A549 (cell line): ENCODE measurements at regions of chr5 and their contacts with region 1.

Region 1: GRCh38 chr5:39547553-39548154 is 122.9 kb upstream of the DAB2 start:
- DNase-seq: peak; percentile 49 to 56
- ATAC-seq: peak in 1 of 2 experiments; percentile 83; a peak in 3 of 6 replicates
- H3K4me3 ChIP-seq: no peak overlapping the region
- H3K27ac ChIP-seq: peak overlapping the region; percentile 19 to 46; a peak in 4 of 6 replicates
- H3K4me1 ChIP-seq: peaks cover 15% of the 10 kb centered on the region; the same call in 2 of the 3 replicates
- CTCF ChIP-seq: peak; percentile 88
- EP300 ChIP-seq: no peak
- POLR2A ChIP-seq: no peak
- RAD21 ChIP-seq: peak; percentile 92 to 94

Region 2: DNA sequence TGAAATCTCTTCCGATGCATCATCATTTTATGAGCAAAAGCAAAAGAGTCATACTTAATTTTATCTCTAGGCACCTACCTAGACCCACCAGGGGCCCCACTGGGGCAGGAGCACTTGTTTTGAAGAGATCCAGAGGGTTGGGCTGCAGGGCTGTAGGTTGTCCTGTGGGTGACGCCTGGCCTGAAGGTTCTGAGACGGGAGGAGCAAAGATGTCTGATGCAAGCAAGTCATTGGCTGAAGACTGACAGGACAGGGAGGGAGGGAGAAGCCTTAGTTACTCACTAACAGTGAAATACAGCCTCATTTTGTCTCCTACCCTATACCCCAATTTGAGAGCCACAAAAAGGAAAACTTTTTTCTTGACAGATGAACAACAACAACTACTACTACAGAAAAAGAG is 166.3 kb before region 1 on chr5:
- CTCF ChIA-PET with region 1: interaction called, 147 read pairs
- POLR2A ChIA-PET with region 1: interaction called, 8 read pairs
- DNase-seq: no peak
- ATAC-seq: no peak; a peak in 1 of 6 replicates
- H3K4me3 ChIP-seq: no peak overlapping the region
- H3K27ac ChIP-seq: no peak overlapping the region
- H3K4me1 ChIP-seq: no peaks in the 10 kb centered on the region
- CTCF ChIP-seq: no peak
- EP300 ChIP-seq: no peak
- POLR2A ChIP-seq: no peak
- RAD21 ChIP-seq: no peak

Region 3: GRCh38 chr5:39399135-39400036 is 148.3 kb before region 1 on chr5:
- CTCF ChIA-PET with region 1: interaction called, 12 read pairs
- POLR2A ChIA-PET with region 1: no interaction called
- DNase-seq: peak; percentile 62 to 89
- ATAC-seq: peak; percentile 96 to 99
- H3K4me3 ChIP-seq: no peak overlapping the region
- H3K27ac ChIP-seq: peak overlapping the region; percentile 75 to 88
- H3K4me1 ChIP-seq: peaks cover 48% of the 10 kb centered on the region
- CTCF ChIP-seq: no peak
- EP300 ChIP-seq: peak; percentile 65; a peak in 2 of 5 replicates
- POLR2A ChIP-seq: no peak
- RAD21 ChIP-seq: peak in 1 of 2 experiments; percentile 50; a peak in 2 of 5 replicates

Region 4: DNA sequence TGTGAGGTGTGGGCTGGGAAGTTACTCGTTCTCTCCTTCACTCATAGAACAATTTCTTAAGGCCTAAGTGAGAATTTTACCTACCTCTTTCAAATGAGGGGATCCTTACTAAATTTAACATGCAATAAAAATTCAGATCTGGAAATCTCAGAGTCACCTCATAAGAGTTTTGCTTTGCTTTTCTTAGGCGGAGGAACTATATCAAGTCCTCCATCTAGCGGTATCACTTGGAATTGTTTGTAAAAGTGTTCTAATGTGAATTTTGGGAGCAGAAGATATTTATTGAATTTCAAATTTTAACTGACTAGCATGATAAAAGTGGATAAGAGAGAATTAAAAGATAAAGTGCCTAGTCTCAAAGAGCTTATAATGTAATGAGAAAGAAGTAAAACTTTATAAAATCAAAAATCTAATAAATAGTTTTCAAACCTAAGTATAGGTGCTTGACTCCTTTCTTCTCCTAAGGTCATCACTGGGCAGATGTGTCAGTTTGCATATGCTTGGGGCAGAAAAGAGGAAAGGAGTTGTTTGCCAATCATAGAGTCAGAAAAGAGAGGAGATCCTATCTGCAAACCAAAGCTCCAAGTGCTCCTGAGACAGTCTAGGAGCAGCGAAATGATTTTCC is 22.9 kb after region 1 on chr5:
- CTCF ChIA-PET with region 1: interaction called, 14 read pairs
- POLR2A ChIA-PET with region 1: no interaction called
- DNase-seq: peak; percentile 10 to 50
- ATAC-seq: peak; percentile 59 to 65; a peak in 3 of 6 replicates
- H3K4me3 ChIP-seq: no peak overlapping the region
- H3K27ac ChIP-seq: peak overlapping the region in 1 of 2 experiments; percentile 56; a peak in 3 of 6 replicates
- H3K4me1 ChIP-seq: peaks cover 5% of the 10 kb centered on the region; the same call in 1 of the 3 replicates
- CTCF ChIP-seq: peak; percentile 80
- EP300 ChIP-seq: no peak
- POLR2A ChIP-seq: no peak
- RAD21 ChIP-seq: peak; percentile 79 to 82

Region 5: GRCh38 chr5:39616131-39616530 is 68.5 kb after region 1 on chr5:
- CTCF ChIA-PET with region 1: no interaction called
- POLR2A ChIA-PET with region 1: no interaction called
- DNase-seq: no peak
- ATAC-seq: no peak
- H3K4me3 ChIP-seq: no peak overlapping the region
- H3K27ac ChIP-seq: no peak overlapping the region
- H3K4me1 ChIP-seq: no peaks in the 10 kb centered on the region
- CTCF ChIP-seq: no peak
- EP300 ChIP-seq: no peak
- POLR2A ChIP-seq: no peak
- RAD21 ChIP-seq: no peak